ENCODE measurements at regions of chr20 and their contacts with region 1.

Region 1: DNA sequence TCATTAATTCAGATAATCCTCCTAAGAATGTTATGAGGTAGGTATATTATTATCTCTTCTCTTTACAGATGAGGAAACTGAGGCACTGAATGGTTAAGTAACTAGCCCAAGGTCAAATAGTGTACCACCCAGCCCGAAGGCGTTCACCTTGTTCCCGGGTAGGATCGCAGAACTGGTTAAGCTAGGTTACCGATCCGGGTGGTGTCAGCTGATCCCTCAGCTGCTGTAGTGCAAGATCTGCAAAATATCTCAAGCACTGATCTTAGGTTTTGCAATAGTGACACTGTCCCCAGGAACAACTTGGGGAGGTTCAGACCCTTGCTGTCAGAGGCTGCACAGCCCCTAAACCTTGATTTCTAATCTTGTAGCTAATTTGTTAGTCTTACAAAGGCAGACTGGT is 28.2 kb downstream of the SLC52A3 start:
- DNase-seq: peak; percentile 54
- H3K4me3 Mint-ChIP-seq: no peak overlapping the region
- H3K27ac Mint-ChIP-seq: no peak overlapping the region
- H3K4me1 Mint-ChIP-seq: peaks cover 9% of the 10 kb centered on the region
- H3K27me3 Mint-ChIP-seq: peaks cover 10% of the 10 kb centered on the region
- CTCF ChIP-seq: no peak

Region 2: DNA sequence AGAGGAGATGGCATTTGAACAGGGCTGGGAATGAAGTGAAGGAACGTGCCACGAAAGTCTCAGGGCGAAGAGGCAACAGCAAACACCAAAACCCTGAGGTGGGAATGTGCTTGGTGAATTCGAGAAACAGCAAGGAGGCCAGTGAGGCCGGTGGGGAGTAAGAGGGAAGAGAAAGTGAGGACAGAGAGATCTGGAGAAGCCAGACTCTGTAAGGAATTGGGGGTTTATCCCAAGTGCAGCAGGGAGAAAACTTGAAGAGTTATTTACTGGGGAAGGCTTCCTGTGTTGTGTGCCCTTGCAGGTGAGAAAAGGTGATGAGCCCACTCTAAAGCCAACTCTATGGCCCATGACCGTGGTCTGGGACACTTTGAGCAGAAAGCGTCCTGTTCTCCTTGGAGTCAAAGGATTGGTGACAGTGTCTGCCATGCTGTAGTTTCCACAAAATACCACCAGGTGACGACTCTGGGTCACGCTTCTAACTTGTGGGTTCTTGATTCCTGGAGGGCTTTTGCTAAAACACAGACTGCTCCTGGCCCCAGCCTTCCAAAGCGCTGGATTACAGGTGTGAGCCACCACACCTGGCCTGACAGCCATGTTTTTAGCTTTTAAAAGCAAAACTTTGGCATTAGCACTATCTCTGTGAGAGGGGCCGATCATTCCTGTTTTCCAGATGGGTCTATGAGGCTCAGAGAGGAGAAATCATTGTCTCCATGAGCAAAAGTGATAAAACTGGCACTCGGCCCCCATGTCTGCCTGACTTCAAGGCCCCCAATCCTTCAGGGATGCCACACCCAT is 178.5 kb before region 1 on chr20:
- CTCF ChIA-PET with region 1: no interaction called
- intact Hi-C with region 1: loop called (anchors 2 kb)
- DNase-seq: peak; percentile 70
- H3K4me3 Mint-ChIP-seq: no peak overlapping the region
- H3K27ac Mint-ChIP-seq: no peak overlapping the region
- H3K4me1 Mint-ChIP-seq: no peaks in the 10 kb centered on the region
- H3K27me3 Mint-ChIP-seq: peaks cover 40% of the 10 kb centered on the region
- CTCF ChIP-seq: peak; percentile 78

Region 3: DNA sequence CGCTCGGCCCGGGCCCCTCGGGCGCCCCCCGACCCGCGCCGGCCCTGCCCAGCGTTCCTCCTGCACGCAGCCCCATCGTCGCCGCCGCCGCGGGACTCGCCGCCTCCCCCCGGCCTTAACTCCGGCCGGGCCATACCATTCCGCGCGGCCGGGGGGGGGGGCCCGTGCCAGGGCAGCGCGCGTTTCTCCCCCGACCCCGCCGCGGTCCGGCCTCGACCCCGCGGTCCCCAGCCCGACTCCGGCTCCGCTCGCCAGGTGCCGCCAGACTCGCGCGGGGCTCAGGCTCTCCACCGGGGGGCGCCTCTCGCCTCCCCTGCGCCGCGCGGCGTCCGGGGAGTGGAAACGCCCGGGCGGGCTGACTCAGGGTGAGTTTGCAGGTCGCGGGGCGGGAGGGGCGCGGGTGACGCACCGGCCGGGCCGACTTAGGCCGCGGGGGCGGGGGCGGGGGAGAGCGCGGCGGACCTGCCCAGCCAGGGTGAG is 87.0 kb before region 1 on chr20 and contains the start of gene SRXN1:
- CTCF ChIA-PET with region 1: no interaction called
- intact Hi-C with region 1: loop called (anchors 5 kb)
- DNase-seq: peak; percentile 91
- H3K4me3 Mint-ChIP-seq: peak within 1 kb of the TSS; percentile 83
- H3K27ac Mint-ChIP-seq: peak within 1 kb of the TSS; percentile 19
- H3K4me1 Mint-ChIP-seq: peaks cover 17% of the 10 kb centered on the region
- H3K27me3 Mint-ChIP-seq: peaks cover 13% of the 10 kb centered on the region
- CTCF ChIP-seq: peak; percentile 69
- total RNA-seq, gene SRXN1: 17.4 and 18.1 TPM in 2 replicates

Measured in Calu3 (cell line).